ENCODE measurements at regions of chr13 and their contacts with region 1.

Region 1: DNA sequence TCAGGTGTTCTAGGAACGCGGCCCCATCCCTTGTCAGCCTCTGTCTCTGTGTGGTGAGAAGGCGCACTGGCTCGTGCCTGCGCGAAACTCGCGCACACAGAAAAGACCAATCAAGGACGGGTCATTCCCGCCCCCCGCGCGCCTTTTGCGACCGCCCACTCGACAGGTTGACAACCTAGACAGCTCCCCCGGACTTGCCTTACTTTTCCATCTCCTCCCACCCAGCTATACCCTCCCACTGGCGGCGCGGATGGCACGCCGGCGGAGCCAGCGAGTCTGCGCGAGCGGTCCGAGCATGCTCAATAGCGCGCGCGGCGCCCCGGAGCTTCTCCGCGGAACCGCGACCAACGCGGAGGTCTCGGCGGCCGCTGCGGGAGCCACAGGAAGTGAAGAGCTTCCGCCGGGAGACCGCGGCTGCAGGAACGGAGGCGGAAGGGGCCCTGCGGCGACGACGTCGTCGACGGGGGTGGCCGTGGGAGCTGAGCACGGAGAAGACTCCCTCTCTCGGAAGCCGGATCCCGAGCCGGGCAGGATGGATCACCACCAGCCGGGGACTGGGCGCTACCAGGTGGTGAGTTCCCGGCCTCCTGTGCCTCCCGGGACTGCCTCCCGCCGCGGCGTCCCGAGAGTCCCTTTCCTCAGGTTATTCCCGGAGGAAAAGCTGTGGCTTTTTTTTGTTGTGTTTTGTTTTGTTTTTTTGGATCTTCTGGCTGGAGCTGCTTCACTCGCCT is at the start of gene NDFIP2:
- DNase-seq: peak; percentile 95 to 98
- H3K4me3 ChIP-seq: peak within 1 kb of the TSS; percentile 75
- H3K4me3 Mint-ChIP-seq: peak within 1 kb of the TSS; percentile 86
- H3K27ac Mint-ChIP-seq: peak within 1 kb of the TSS; percentile 90
- H3K4me1 ChIP-seq: peaks cover 35% of the 10 kb centered on the region
- H3K4me1 Mint-ChIP-seq: peaks cover 17% of the 10 kb centered on the region
- H3K27me3 ChIP-seq: no peaks in the 10 kb centered on the region
- H3K27me3 Mint-ChIP-seq: no peaks in the 10 kb centered on the region
- CTCF ChIP-seq: peak in 1 of 2 experiments; percentile 6
- total RNA-seq, gene NDFIP2: 53.3 and 61.2 TPM in 2 replicates

Region 2: DNA sequence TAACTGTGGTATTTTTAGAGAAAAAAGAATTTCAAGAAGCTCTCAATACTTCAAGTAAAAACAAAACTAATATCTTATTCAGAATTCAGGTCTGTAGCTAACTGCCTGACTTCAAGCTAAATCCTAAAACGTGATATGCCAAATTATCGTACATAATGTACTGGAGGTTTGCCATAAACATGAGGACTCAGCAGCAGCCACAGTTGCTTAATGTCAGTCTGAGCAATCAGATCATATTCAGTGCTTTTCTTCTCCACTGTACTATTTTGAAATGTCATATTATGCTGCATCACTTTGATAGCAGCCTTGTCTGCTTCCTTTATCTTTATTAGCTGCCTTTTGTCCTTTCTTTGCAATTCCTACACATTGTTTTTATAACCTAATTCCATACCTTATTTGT is 1297.4 kb before region 1 on chr13:
- CTCF ChIA-PET with region 1: no interaction called
- POLR2A ChIA-PET with region 1: no interaction called
- intact Hi-C with region 1: no loop called
- DNase-seq: no peak
- H3K4me3 ChIP-seq: no peak overlapping the region
- H3K4me3 Mint-ChIP-seq: no peak overlapping the region
- H3K27ac Mint-ChIP-seq: no peak overlapping the region
- H3K4me1 ChIP-seq: no peaks in the 10 kb centered on the region
- H3K4me1 Mint-ChIP-seq: no peaks in the 10 kb centered on the region
- H3K27me3 ChIP-seq: no peaks in the 10 kb centered on the region
- H3K27me3 Mint-ChIP-seq: no peaks in the 10 kb centered on the region
- CTCF ChIP-seq: no peak

Region 3: DNA sequence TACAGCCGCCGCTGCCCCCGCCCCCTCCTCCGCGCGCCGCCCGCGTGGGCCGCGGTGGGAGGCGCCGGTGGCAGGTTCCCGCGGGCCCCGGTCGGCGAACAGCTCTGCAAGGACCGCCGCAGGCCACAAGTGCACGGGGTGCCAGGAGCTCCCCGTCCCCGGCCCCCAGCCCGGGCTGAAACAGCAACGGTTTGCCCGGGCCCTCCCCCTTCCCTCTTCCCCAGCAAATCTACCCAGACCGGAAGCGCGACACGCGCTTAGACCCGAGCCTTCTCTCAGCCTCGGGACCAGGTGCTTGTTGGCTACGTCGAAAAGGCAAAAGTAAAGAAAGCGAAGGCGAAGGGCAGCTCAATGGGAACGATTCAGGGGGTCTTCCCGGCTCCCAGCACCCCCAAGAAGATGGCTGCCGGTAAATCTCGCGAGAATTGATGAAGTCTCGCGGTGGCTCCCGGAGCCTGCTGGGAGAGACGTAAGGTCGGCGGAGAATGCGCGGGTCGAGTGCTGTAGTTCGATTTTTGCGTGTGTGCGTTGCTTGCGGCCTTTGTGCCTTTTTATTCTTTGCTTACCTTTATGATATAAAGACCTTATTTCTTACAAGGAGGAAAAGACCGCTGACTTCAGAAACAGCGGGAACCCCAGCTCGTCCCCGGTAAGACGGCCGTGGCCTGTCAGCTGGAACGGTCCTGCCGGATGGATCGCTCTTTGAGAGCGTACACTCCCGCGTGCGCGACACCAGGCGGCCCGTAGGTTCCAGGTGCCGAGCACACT is 75.1 kb before region 1 on chr13 and contains the start of gene RBM26:
- CTCF ChIA-PET with region 1: no interaction called
- POLR2A ChIA-PET with region 1: interaction called, 7 read pairs
- intact Hi-C with region 1: loop called (anchors 1 kb)
- DNase-seq: peak; percentile 96
- H3K4me3 ChIP-seq: peak within 1 kb of the TSS; percentile 86
- H3K4me3 Mint-ChIP-seq: no peak within 1 kb of the TSS
- H3K27ac Mint-ChIP-seq: peak within 1 kb of the TSS; percentile 83
- H3K4me1 ChIP-seq: peaks cover 21% of the 10 kb centered on the region
- H3K4me1 Mint-ChIP-seq: peaks cover 26% of the 10 kb centered on the region
- H3K27me3 ChIP-seq: no peaks in the 10 kb centered on the region
- H3K27me3 Mint-ChIP-seq: no peaks in the 10 kb centered on the region
- CTCF ChIP-seq: no peak
- total RNA-seq, gene RBM26: 57.4 and 60.4 TPM in 2 replicates

Region 4: DNA sequence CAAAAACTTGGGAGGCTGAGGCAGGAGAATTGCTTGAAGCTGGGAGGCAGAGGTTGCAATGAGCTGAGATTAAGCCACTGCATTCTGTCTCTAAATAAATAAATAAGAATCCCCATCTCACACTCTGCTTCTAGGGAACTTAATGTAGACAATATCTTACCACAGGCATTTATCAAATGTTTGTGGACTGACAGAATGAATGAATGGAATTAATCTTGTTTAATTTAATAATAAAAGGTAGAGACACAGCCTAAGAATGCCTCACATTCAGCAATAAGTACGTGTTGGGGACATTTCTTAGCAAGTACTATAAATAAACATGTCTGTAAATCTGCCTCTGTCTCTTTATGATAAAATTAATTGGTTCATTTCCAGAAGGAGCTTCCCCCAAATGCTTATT is 38.9 kb before region 1 on chr13:
- CTCF ChIA-PET with region 1: interaction called, 3 read pairs
- POLR2A ChIA-PET with region 1: interaction called, 7 read pairs
- intact Hi-C with region 1: loop called (anchors 2 kb)
- DNase-seq: no peak
- H3K4me3 ChIP-seq: no peak overlapping the region
- H3K4me3 Mint-ChIP-seq: no peak overlapping the region
- H3K27ac Mint-ChIP-seq: peak overlapping the region; percentile 68
- H3K4me1 ChIP-seq: peaks cover 12% of the 10 kb centered on the region
- H3K4me1 Mint-ChIP-seq: peaks cover 8% of the 10 kb centered on the region
- H3K27me3 ChIP-seq: no peaks in the 10 kb centered on the region
- H3K27me3 Mint-ChIP-seq: no peaks in the 10 kb centered on the region
- CTCF ChIP-seq: no peak

Region 5: GRCh38 chr13:79466872-79467271 is 14.2 kb before region 1 on chr13:
- CTCF ChIA-PET with region 1: no interaction called
- POLR2A ChIA-PET with region 1: interaction called, 7 read pairs
- intact Hi-C with region 1: loop called (anchors 2 kb)
- DNase-seq: no peak
- H3K4me3 ChIP-seq: no peak overlapping the region
- H3K4me3 Mint-ChIP-seq: no peak overlapping the region
- H3K27ac Mint-ChIP-seq: no peak overlapping the region
- H3K4me1 ChIP-seq: peaks cover 11% of the 10 kb centered on the region; the same call in 1 of the 2 replicates
- H3K4me1 Mint-ChIP-seq: peaks cover 12% of the 10 kb centered on the region
- H3K27me3 ChIP-seq: no peaks in the 10 kb centered on the region
- H3K27me3 Mint-ChIP-seq: no peaks in the 10 kb centered on the region
- CTCF ChIP-seq: no peak

Region 6: GRCh38 chr13:79541426-79542049 is 60.4 kb after region 1 on chr13:
- CTCF ChIA-PET with region 1: interaction called, 9 read pairs
- POLR2A ChIA-PET with region 1: interaction called, 11 read pairs
- intact Hi-C with region 1: loop called (anchors 2 kb)
- DNase-seq: peak in 1 of 2 experiments; percentile 63
- H3K4me3 ChIP-seq: no peak overlapping the region
- H3K4me3 Mint-ChIP-seq: no peak overlapping the region
- H3K27ac Mint-ChIP-seq: no peak overlapping the region
- H3K4me1 ChIP-seq: no peaks in the 10 kb centered on the region
- H3K4me1 Mint-ChIP-seq: no peaks in the 10 kb centered on the region
- H3K27me3 ChIP-seq: no peaks in the 10 kb centered on the region
- H3K27me3 Mint-ChIP-seq: no peaks in the 10 kb centered on the region
- CTCF ChIP-seq: peak; percentile 73 to 84

Measured in Caco-2 (cell line).